Endothelial cell of umbilical vein (primary cell): ENCODE measurements at regions of chr6 and their contacts with region 1.

Region 1: DNA sequence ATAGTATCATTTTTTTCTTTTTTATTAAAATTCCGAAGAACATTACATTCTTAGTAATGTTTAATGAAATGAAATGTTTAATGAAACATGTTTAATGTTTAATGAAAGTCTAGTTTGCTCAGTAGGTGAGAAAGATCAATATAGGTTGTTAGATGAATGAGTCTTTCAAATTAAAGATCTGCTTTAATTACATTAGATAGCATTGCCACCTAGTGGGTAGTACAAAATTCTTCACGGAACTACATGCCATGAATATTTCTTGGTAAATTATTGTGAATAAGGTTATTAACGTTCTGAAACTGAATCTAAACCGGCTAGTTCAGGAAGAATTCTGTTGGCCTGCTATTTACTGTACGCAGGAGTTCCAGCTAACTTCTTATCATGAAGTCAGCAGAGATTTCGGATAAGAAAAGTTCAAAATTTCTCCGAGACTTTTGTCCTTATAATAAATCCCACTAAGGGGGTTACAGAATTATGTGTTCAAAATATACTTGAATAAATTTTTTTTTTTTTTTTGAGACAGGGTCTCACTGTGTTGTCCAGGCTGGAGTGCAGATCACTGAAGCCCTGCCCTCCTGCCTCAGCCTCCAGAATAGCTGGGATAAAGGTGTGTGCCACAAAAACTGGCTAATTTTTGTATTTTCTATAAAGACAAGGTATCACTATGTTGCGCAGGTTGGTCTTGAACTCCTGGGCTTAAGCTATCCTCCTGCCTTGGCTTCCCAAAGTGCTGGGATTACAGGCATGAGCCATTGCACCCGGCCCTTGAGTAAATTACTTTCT is 7.9 kb upstream of the GMNN start:
- DNase-seq: peak; percentile 44
- H3K4me3 ChIP-seq: no peak overlapping the region
- H3K27ac ChIP-seq: no peak overlapping the region
- H3K4me1 ChIP-seq: no peaks in the 10 kb centered on the region
- H3K27me3 ChIP-seq: no peaks in the 10 kb centered on the region
- CTCF ChIP-seq: peak; percentile 17 to 31
- POLR2A ChIP-seq: no peak

Region 2: DNA sequence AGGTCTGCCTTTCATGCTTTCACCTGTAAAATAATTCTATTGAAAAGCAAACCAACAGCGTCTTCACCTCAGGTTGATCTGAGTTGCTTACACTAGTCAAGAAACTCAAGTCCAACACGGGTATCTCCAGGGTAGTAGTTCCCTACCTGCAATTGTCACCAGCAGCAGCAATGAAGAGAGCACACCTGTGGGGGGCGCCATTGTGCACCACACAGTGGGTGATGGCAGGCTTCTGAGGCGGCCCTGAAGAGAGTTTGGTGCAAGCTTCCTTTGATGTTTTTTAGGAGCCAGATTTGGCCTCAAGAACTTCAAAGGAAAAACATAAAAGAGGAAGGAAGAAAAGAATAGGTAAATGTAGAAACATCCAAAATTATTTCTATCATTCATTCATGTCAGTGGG is 166.0 kb before region 1 on chr6:
- CTCF ChIA-PET with region 1: no interaction called
- POLR2A ChIA-PET with region 1: no interaction called
- dilution Hi-C with region 1: no loop called
- intact Hi-C with region 1: no loop called
- DNase-seq: no peak
- H3K4me3 ChIP-seq: no peak overlapping the region
- H3K27ac ChIP-seq: no peak overlapping the region
- H3K4me1 ChIP-seq: no peaks in the 10 kb centered on the region
- H3K27me3 ChIP-seq: no peaks in the 10 kb centered on the region
- CTCF ChIP-seq: no peak
- POLR2A ChIP-seq: no peak

Region 3: GRCh38 chr6:24743265-24743943 is 23.5 kb before region 1 on chr6:
- CTCF ChIA-PET with region 1: interaction called, 10 read pairs
- POLR2A ChIA-PET with region 1: no interaction called
- dilution Hi-C with region 1: no loop called
- intact Hi-C with region 1: no loop called
- DNase-seq: peak; percentile 95
- H3K4me3 ChIP-seq: peak overlapping the region in 1 of 3 experiments; percentile 9
- H3K27ac ChIP-seq: peak overlapping the region; percentile 90
- H3K4me1 ChIP-seq: peaks cover 16% of the 10 kb centered on the region
- H3K27me3 ChIP-seq: no peaks in the 10 kb centered on the region
- CTCF ChIP-seq: no peak
- POLR2A ChIP-seq: no peak